A549 (cell line): ENCODE measurements at regions of chr11 and their contacts with region 1.

Region 1: DNA sequence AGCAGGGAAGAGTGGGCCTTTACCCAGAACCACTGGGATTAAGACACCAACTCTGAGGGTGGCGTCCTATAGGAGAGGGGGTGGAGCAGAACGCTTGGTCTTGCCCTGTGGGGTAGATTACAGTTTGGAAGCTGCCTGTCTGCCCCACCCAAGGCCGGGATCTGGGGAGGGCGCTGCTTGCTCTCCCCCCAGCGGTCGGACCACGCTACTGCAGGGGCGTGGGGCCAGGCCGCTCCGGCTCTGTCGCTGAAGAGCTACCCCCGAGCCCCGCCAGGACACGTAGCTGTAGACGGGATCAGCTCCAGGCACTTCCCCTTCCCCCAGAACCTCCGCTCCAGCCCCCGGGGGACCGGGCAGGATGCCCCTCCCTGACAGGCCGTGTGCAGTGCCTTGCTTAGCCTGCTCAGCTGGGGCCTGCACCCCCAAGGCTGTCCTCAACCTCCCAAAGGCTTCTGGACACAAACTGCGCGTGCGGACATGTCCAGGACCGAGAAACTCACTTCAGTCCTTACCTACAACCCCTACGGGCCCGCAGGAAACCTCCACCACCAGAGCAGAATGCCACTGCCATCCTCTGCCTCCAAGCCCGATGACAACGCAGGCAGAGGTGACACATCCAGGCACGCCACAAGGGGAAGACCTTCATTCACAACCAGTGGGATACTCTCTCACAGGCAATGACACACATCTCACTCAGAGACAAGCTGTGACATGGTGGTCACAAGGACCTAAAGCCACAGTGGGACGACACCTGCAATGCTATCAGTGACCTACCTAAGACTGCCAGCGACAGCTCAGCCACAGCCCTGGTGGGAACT is 3.6 kb downstream of the AHNAK start:
- DNase-seq: peak; percentile 72 to 82
- ATAC-seq: peak; percentile 11 to 46; a peak in 5 of 6 replicates
- H3K4me3 ChIP-seq: peak overlapping the region; percentile 96
- H3K27ac ChIP-seq: peak overlapping the region; percentile 97 to 98
- H3K4me1 ChIP-seq: peaks cover 75% of the 10 kb centered on the region
- CTCF ChIP-seq: peak; percentile 87
- EP300 ChIP-seq: no peak
- POLR2A ChIP-seq: no peak
- RAD21 ChIP-seq: peak; percentile 92 to 95

Region 2: GRCh38 chr11:62427630-62428233 is 115.2 kb before region 1 on chr11:
- CTCF ChIA-PET with region 1: interaction called, 322 read pairs
- POLR2A ChIA-PET with region 1: interaction called, 9 read pairs
- DNase-seq: no peak
- ATAC-seq: no peak
- H3K4me3 ChIP-seq: no peak overlapping the region
- H3K27ac ChIP-seq: peak overlapping the region; percentile 55 to 86
- H3K4me1 ChIP-seq: peaks cover 48% of the 10 kb centered on the region
- CTCF ChIP-seq: no peak
- EP300 ChIP-seq: no peak
- POLR2A ChIP-seq: no peak
- RAD21 ChIP-seq: no peak

Region 3: GRCh38 chr11:62449451-62449851 is 93.5 kb before region 1 on chr11:
- CTCF ChIA-PET with region 1: interaction called, 17 read pairs
- POLR2A ChIA-PET with region 1: interaction called, 4 read pairs
- DNase-seq: peak in 1 of 2 experiments; percentile 45
- ATAC-seq: peak; percentile 76 to 79
- H3K4me3 ChIP-seq: no peak overlapping the region
- H3K27ac ChIP-seq: peak overlapping the region in 1 of 2 experiments; percentile 69; a peak in 3 of 6 replicates
- H3K4me1 ChIP-seq: peaks cover 22% of the 10 kb centered on the region; the same call in 2 of the 3 replicates
- CTCF ChIP-seq: no peak
- EP300 ChIP-seq: no peak
- POLR2A ChIP-seq: no peak
- RAD21 ChIP-seq: no peak

Region 4: DNA sequence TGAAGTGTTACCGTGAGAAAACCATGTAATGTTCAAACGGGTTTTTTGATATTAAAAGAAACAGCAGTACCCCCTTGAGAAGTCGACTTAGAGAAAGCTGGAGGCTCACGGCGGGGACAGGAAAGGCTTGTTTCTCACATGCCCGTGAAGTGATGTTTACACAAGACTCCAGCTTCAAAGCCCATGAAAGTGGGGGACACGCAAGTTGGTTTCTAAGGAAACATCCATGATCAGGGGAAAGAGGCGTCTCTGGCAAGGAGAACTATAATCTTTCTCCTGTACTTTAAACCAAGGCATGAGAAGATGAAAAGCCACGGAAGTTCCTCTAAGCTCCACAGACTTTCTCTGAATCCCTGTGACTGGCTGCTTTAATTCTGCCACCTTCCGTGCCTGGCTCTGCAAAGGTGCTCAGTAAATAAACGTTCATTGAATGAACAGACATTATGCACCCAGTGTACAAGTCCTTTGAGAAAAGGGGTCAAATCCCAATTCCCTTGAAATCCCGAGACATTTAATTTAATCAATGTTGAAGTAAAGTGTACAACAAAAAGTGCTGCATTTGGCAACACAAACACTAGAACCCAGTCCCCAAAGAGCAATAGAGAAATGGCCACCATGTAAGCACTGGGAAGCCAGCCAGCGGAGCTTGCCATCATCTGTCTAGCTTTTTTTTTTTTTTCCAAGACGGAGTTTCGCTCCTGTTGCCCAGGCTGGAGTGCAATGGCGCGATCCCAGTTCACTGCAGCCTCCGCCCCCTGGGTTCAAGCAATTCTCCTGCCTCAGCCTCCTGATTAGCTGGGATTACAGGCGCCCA is 55.0 kb before region 1 on chr11:
- CTCF ChIA-PET with region 1: interaction called, 143 read pairs
- POLR2A ChIA-PET with region 1: no interaction called
- DNase-seq: no peak
- ATAC-seq: no peak
- H3K4me3 ChIP-seq: no peak overlapping the region
- H3K27ac ChIP-seq: no peak overlapping the region
- H3K4me1 ChIP-seq: no peaks in the 10 kb centered on the region
- CTCF ChIP-seq: no peak
- EP300 ChIP-seq: no peak
- POLR2A ChIP-seq: no peak
- RAD21 ChIP-seq: no peak

Region 5: DNA sequence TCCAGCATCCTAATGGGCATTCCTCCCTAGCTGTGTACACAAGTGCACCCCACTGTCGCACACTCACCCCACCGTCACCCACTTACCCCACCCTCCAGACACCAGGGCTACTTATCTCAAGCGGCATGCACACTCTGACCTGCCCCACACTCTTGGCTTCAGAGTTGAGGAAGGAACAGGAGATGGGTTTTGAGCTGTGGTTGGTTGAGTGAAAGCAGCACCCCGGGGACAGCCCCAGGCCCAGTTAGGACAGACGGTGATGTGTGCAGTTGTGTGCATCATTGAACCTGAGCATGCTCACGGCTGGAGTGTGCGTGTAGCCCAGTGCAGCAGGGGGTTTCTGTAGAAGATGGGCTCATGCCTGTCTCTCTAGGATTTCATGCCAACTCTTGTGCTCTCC is 28.8 kb before region 1 on chr11:
- CTCF ChIA-PET with region 1: interaction called, 82 read pairs
- POLR2A ChIA-PET with region 1: no interaction called
- DNase-seq: no peak
- ATAC-seq: peak in 1 of 2 experiments; percentile 14; a peak in 1 of 6 replicates
- H3K4me3 ChIP-seq: no peak overlapping the region
- H3K27ac ChIP-seq: no peak overlapping the region; a peak in 1 of 6 replicates
- H3K4me1 ChIP-seq: peaks cover 28% of the 10 kb centered on the region
- CTCF ChIP-seq: no peak
- EP300 ChIP-seq: no peak
- POLR2A ChIP-seq: no peak
- RAD21 ChIP-seq: no peak

Region 6: GRCh38 chr11:62573592-62574362 is 30.8 kb after region 1 on chr11 and contains the start of gene EEF1G:
- CTCF ChIA-PET with region 1: interaction called, 13 read pairs
- POLR2A ChIA-PET with region 1: interaction called, 5 read pairs
- DNase-seq: peak; percentile 99 to 100
- ATAC-seq: peak; percentile 91 to 96
- H3K4me3 ChIP-seq: peak within 1 kb of the TSS; percentile 97
- H3K27ac ChIP-seq: peak within 1 kb of the TSS; percentile 93 to 94
- H3K4me1 ChIP-seq: peaks cover 41% of the 10 kb centered on the region
- CTCF ChIP-seq: no peak
- EP300 ChIP-seq: no peak
- POLR2A ChIP-seq: peak; percentile 86
- RAD21 ChIP-seq: no peak
- polyA plus RNA-seq, gene EEF1G: 1,728 and 1,795 TPM in 2 replicates